ENCODE measurements at regions of chr21 and their contacts with region 1.

Region 1: DNA sequence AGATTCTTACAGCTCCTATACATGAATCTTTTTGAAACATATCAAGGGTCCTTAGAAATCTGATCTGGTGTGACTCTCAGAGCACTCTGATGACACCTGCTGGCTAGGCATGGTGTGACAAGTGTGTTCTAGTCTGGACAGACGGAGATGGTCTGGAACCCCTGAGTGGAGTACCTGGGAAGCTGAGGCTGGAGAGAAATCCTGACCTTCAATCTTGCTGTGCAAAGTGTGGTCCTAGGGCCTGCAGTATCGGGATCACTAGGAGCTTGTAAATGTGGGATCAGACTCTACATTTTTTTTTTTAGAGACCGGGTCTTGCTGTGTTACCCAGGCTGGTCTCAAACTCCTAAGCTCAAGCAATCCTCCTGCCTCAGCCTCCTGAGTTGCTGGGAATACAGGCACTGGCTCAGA is 78.6 kb upstream of the SOD1 start:
- DNase-seq: peak; percentile 55 to 79 (median 70)
- H3K4me3 ChIP-seq: no peak overlapping the region
- H3K27ac ChIP-seq: no peak overlapping the region
- H3K4me1 ChIP-seq: no peaks in the 10 kb centered on the region
- H3K27me3 ChIP-seq: no peaks in the 10 kb centered on the region

Region 2: GRCh38 chr21:31198575-31198974 is 382.3 kb before region 1 on chr21:
- CTCF ChIA-PET with region 1: interaction called, 75 read pairs
- POLR2A ChIA-PET with region 1: no interaction called
- DNase-seq: peak; percentile 48 to 69 (median 57)
- H3K4me3 ChIP-seq: no peak overlapping the region
- H3K27ac ChIP-seq: no peak overlapping the region
- H3K4me1 ChIP-seq: peaks cover 3 to 22% (median 13%) of the 10 kb centered on the region in 4 experiments
- H3K27me3 ChIP-seq: no peaks in the 10 kb centered on the region

Region 3: GRCh38 chr21:31558962-31559367 is 21.9 kb before region 1 on chr21:
- CTCF ChIA-PET with region 1: interaction called, 16 read pairs
- POLR2A ChIA-PET with region 1: no interaction called
- DNase-seq: peak; percentile 94 to 97 (median 97)
- H3K4me3 ChIP-seq: peak overlapping the region; percentile 46 to 85 (median 77)
- H3K27ac ChIP-seq: no peak overlapping the region
- H3K4me1 ChIP-seq: peaks cover 0 to 25% (median 23%) of the 10 kb centered on the region in 4 experiments
- H3K27me3 ChIP-seq: peaks cover 0 to 30% (median 12%) of the 10 kb centered on the region in 5 experiments

Region 4: DNA sequence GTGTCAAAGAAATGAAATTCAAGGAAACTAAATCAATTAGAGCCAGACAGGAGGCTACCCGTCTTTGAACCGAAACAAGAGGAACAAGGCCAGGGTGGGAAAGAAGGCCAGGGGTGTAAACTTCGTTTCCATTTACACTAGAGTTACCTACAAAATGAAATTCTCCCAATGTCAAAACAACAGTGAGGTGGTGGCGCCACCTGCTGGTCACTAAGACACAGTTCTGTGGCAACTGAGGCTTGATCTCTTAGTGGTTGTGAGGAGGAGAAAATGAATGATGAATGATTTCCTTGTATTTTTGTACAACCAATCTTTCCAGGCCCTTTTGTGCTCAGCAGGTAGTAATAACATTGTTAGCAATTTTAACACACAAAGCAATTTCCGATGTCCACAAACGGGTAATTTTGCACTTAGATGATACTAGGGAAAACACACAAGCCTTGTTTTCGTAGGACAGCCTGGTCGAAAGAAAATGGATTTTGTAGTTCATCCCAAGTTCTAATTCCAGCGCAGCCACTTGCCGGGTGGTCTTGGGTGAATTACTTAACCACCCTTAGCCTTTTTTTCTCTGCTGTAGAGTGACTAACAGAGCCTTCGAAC is 23.8 kb after region 1 on chr21:
- CTCF ChIA-PET with region 1: interaction called, 25 read pairs
- POLR2A ChIA-PET with region 1: no interaction called
- DNase-seq: peak; percentile 64 to 84 (median 78)
- H3K4me3 ChIP-seq: no peak overlapping the region
- H3K27ac ChIP-seq: no peak overlapping the region
- H3K4me1 ChIP-seq: peaks cover 0 to 3% (median under 1%) of the 10 kb centered on the region in 4 experiments
- H3K27me3 ChIP-seq: no peaks in the 10 kb centered on the region

Region 5: DNA sequence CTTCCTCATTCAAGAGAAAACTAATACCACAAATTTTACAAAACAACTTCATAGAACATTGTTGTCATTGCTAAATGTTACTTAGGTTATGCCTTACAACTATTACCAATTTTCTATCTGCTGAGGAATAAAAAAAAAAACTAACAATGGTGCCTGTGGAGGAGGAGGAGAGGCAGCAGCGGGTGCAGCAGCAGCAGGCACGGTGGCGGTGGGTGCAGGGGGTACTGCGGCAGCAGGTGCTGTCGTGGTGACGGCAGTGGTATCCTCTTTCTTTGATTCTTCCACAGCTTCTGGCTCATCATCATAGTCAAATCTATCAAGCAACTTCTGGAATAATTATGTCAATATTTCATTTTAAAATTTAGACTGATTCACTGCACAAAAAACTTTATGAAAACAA is 115.6 kb after region 1 on chr21:
- CTCF ChIA-PET with region 1: no interaction called
- POLR2A ChIA-PET with region 1: no interaction called
- DNase-seq: no peak
- H3K4me3 ChIP-seq: no peak overlapping the region
- H3K27ac ChIP-seq: no peak overlapping the region
- H3K4me1 ChIP-seq: no peaks in the 10 kb centered on the region
- H3K27me3 ChIP-seq: no peaks in the 10 kb centered on the region

Measured in common myeloid progenitor, CD34-positive (primary cell).